ENCODE measurements at regions of chr1 and their contacts with region 1.

Region 1: DNA sequence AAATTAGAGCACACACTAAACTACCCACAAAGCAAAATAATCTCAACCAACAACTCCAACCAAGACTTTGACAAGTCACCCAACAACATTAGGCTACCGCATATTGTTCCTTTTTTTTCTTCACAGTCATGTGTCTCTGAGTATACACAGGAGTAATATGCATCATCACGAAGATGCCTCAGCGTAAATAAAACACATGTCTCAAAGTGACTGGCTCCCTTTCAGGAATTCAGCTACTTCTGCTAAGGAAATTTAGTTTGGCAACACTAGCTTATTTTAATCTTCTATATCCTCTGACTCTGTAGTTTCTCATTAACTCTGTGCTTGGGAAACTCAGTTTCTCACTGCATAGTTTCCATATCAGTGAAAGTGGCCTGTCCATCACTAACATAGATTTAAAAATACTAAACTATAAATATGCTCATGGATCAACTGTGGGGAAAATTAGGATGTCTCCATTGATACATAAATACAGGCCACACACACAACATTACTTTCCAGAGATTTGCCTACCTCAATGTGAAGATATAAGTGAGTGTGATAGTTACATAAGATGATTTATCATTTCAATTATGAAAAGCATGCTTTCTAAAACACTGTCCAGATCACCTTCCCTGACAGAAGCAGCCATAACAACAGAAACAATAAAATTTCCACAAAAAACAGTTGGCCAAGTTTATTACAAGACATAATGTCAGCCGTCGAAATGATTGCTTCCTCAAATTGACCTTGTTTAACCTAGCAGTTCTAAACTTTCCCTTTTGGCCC is 113.2 kb downstream of the PTGER3 start:
- DNase-seq: no peak
- ATAC-seq: no peak

Region 2: GRCh38 chr1:69940816-69941215 is 993.6 kb before region 1 on chr1:
- intact Hi-C with region 1: loop called (anchors 5 kb)
- DNase-seq: no peak
- ATAC-seq: no peak

Measured in sciatic nerve (tissue), 2 donors.